ENCODE measurements at regions of chr1 and their contacts with region 1.

Region 1: GRCh38 chr1:52296345-52296744 is 69.7 kb downstream of the CC2D1B start:
- DNase-seq: no peak
- H3K4me3 ChIP-seq: no peak overlapping the region
- H3K27ac ChIP-seq: no peak overlapping the region
- H3K4me1 ChIP-seq: no peaks in the 10 kb centered on the region
- H3K27me3 ChIP-seq: no peaks in the 10 kb centered on the region
- CTCF ChIP-seq: peak in 3 of 4 experiments; percentile 44 to 73 (median 63)
- POLR2A ChIP-seq: no peak

Region 2: GRCh38 chr1:52127181-52128180 is 168.9 kb before region 1 on chr1:
- intact Hi-C with region 1: loop called (anchors 5 kb)
- DNase-seq: peak; percentile 41
- H3K4me3 ChIP-seq: no peak overlapping the region
- H3K27ac ChIP-seq: no peak overlapping the region
- H3K4me1 ChIP-seq: no peaks in the 10 kb centered on the region
- H3K27me3 ChIP-seq: no peaks in the 10 kb centered on the region
- CTCF ChIP-seq: peak in 3 of 4 experiments; percentile 46 to 70 (median 66)
- POLR2A ChIP-seq: no peak

Region 3: DNA sequence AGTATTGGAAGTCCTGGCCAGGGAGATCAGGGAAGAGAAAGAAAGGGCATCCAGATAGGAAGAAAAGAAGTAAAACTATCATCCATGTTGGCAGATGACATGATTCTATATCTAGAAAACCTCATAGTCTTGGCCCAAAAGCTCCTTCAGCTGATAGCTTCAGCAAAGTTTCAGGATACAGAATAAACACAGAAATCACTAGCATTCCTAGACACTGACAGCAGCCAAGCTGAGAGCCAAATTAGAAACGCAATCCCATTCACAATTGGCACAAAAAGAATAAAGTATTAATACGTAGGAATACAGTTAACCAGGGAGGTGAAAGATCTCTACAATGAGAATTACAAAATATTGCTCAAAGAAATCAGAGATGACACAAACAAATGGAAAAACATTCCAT is 109.9 kb before region 1 on chr1:
- intact Hi-C with region 1: no loop called
- DNase-seq: no peak
- H3K4me3 ChIP-seq: no peak overlapping the region
- H3K27ac ChIP-seq: no peak overlapping the region
- H3K4me1 ChIP-seq: no peaks in the 10 kb centered on the region
- H3K27me3 ChIP-seq: no peaks in the 10 kb centered on the region
- CTCF ChIP-seq: no peak
- POLR2A ChIP-seq: no peak

Measured in prostate gland (tissue), 2 donors.